MCF 10A (cell line): ENCODE measurements at regions of chr6 and their contacts with region 1.

Region 1: GRCh38 chr6:115629415-115629814 is 431.3 kb downstream of the FRK start:
- DNase-seq: no peak
- H3K4me3 Mint-ChIP-seq: no peak overlapping the region
- H3K27ac Mint-ChIP-seq: no peak overlapping the region
- H3K4me1 Mint-ChIP-seq: no peaks in the 10 kb centered on the region
- H3K27me3 Mint-ChIP-seq: no peaks in the 10 kb centered on the region
- CTCF ChIP-seq: no peak

Region 2: GRCh38 chr6:115443825-115444478 is 185.5 kb before region 1 on chr6:
- CTCF ChIA-PET with region 1: no interaction called
- POLR2A ChIA-PET with region 1: no interaction called
- intact Hi-C with region 1: no loop called
- DNase-seq: no peak
- H3K4me3 Mint-ChIP-seq: no peak overlapping the region
- H3K27ac Mint-ChIP-seq: no peak overlapping the region
- H3K4me1 Mint-ChIP-seq: peaks cover 5% of the 10 kb centered on the region
- H3K27me3 Mint-ChIP-seq: peaks cover 19% of the 10 kb centered on the region
- CTCF ChIP-seq: no peak

Region 3: DNA sequence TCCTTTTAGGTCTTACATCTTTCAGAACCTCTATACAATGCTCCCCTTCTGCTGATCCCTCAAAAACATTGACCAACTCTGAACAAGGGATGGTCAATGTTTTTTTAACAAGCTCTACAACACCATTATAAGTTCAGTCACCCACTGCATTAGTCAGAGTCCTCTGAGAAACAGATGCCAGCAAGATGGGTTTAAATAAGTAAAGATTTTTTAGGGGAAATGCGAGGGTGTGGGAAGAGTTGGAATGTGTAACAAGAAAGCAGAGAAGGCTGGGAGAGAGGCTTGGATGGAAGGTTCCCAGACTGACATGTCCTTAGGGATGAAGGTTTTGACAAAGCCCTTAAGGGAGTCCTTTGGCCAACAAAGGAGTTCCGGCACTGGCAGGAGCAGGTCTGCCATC is 47.0 kb before region 1 on chr6:
- CTCF ChIA-PET with region 1: no interaction called
- POLR2A ChIA-PET with region 1: no interaction called
- intact Hi-C with region 1: no loop called
- DNase-seq: no peak
- H3K4me3 Mint-ChIP-seq: no peak overlapping the region
- H3K27ac Mint-ChIP-seq: no peak overlapping the region
- H3K4me1 Mint-ChIP-seq: no peaks in the 10 kb centered on the region
- H3K27me3 Mint-ChIP-seq: peaks cover 17% of the 10 kb centered on the region
- CTCF ChIP-seq: no peak

Region 4: DNA sequence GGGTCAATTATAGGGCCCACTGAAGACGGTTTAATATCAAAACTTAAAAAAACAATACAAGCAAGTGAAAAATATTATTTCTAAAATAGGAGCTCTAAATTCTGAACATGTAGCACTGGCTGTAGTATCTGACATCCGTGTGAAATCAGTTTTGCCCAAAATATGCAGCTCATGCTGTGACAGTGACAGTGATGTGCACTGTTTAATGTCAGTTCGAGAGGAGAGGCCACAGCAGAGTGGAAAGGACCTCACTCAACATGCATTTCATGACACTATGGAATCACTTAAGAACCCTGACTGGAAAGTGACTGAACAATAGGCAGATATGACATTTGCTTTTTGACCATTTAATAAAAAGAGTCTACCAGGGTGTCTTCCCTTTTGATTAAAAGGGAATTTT is 34.3 kb after region 1 on chr6:
- CTCF ChIA-PET with region 1: no interaction called
- POLR2A ChIA-PET with region 1: no interaction called
- intact Hi-C with region 1: loop called (anchors 5 kb)
- DNase-seq: no peak
- H3K4me3 Mint-ChIP-seq: no peak overlapping the region
- H3K27ac Mint-ChIP-seq: no peak overlapping the region
- H3K4me1 Mint-ChIP-seq: no peaks in the 10 kb centered on the region
- H3K27me3 Mint-ChIP-seq: peaks cover 13% of the 10 kb centered on the region
- CTCF ChIP-seq: no peak

Region 5: GRCh38 chr6:115691433-115691832 is 62.0 kb after region 1 on chr6:
- CTCF ChIA-PET with region 1: no interaction called
- POLR2A ChIA-PET with region 1: no interaction called
- intact Hi-C with region 1: no loop called
- DNase-seq: no peak
- H3K4me3 Mint-ChIP-seq: no peak overlapping the region
- H3K27ac Mint-ChIP-seq: no peak overlapping the region
- H3K4me1 Mint-ChIP-seq: no peaks in the 10 kb centered on the region
- H3K27me3 Mint-ChIP-seq: peaks cover 14% of the 10 kb centered on the region
- CTCF ChIP-seq: no peak